PC-9 (cell line): ENCODE measurements at regions of chr2 and their contacts with region 1.

Region 1: GRCh38 chr2:120901201-120901600 is 165.5 kb downstream of the GLI2 start:
- DNase-seq: no peak
- H3K4me3 ChIP-seq: no peak overlapping the region
- H3K27ac ChIP-seq: no peak overlapping the region
- H3K4me1 ChIP-seq: no peaks in the 10 kb centered on the region
- H3K27me3 ChIP-seq: peaks cover 24% of the 10 kb centered on the region
- CTCF ChIP-seq: no peak

Region 2: DNA sequence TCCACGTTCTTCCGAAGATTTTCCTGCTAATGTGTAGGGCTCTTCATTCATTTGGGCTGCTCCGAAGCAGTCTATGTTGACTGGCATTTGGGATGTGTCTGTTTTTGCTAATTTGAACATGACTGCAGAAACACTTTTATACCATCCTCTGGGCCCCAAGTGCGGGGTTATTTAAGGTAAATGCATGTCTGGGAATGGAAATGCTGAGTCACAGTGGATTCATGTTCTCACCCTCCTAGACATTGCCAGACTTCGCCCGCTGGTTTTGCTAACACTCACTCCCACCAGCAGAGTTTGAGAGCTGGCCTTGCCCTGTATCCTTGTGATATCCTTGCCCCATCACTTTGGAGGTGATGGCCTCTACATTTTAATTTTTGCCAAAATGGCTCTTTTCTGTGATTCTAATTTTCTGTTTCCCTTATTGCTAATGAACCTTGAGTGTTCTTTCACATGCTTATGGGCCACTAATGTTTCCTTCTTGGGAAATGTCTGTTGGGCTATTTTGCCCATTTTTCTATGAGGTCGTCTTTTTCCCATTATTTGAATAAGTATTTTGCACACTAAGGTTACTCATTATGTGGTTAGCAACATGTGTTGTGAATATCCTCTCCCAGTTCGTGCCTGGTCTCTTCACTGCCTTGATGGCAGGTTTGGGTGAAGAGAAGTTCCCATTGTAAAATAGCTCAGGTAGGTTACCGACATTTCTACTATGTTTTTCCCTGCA is 38.6 kb after region 1 on chr2:
- CTCF ChIA-PET with region 1: no interaction called
- POLR2A ChIA-PET with region 1: interaction called, 11 read pairs
- intact Hi-C with region 1: no loop called
- DNase-seq: no peak
- H3K4me3 ChIP-seq: no peak overlapping the region
- H3K27ac ChIP-seq: no peak overlapping the region
- H3K4me1 ChIP-seq: peaks cover 11% of the 10 kb centered on the region
- H3K27me3 ChIP-seq: no peaks in the 10 kb centered on the region
- CTCF ChIP-seq: no peak

Region 3: GRCh38 chr2:121297217-121297830 is 396.1 kb after region 1 on chr2:
- CTCF ChIA-PET with region 1: no interaction called
- POLR2A ChIA-PET with region 1: no interaction called
- intact Hi-C with region 1: no loop called
- DNase-seq: peak; percentile 42 to 49
- H3K4me3 ChIP-seq: no peak overlapping the region
- H3K27ac ChIP-seq: no peak overlapping the region
- H3K4me1 ChIP-seq: peaks cover 7% of the 10 kb centered on the region
- H3K27me3 ChIP-seq: no peaks in the 10 kb centered on the region
- CTCF ChIP-seq: peak; percentile 80